ENCODE measurements at regions of chr14 and their contacts with region 1.

Region 1: DNA sequence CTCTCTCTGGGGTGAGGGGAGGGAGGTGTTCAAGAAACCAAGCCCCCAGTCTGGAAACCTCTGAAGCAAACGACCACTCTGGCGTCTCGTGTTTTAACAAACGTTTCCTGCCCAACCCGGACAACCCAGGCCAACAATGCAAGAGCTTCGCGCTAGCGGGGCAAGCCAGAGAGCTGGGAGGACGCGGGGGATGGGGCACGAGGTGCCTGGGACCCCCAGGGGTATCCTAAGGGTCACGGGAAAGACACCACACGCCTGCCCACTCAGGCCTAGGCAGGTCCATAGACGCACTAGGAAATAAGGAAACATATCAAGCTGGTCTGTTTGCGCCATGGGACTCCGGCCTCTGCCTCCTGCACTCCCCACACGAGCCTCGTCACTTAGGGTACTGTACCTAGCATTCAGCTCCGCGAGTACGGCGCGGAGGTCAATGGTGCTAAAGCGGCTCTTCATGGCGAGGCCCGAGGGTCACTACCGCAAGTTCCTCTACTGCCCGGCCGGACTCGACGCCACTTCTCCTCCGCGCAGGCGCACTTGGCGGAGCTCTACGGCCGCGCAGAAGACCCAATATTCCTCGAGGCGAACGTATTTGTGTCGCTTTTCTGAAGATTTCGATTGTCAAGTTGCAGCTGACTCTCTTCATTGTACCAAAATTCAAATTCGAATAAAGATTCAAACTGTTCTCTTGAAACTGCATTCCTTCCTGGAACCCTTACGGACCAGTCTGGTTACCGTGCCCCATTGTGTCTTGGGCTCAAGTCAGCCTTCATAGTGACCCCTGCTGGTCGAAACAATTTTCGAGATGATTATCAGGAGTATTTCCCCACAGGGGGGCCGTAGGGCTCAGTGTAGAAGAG is at the start of gene NEMF:
- DNase-seq: peak; percentile 86
- ATAC-seq: peak; percentile 87
- H3K4me3 ChIP-seq: peak within 1 kb of the TSS; percentile 80 to 97
- H3K27ac ChIP-seq: peak within 1 kb of the TSS; percentile 92
- H3K4me1 ChIP-seq: peaks cover 7% of the 10 kb centered on the region; the same call in 1 of the 2 replicates
- H3K27me3 ChIP-seq: no peaks in the 10 kb centered on the region
- CTCF ChIP-seq: peak; percentile 83
- total RNA-seq, gene NEMF: 38.3 TPM

Region 2: GRCh38 chr14:50156111-50156510 is 303.6 kb after region 1 on chr14:
- CTCF ChIA-PET with region 1: no interaction called
- POLR2A ChIA-PET with region 1: interaction called, 14 read pairs
- in situ Hi-C with region 1: no loop called
- intact Hi-C with region 1: no loop called
- DNase-seq: no peak
- ATAC-seq: no peak
- H3K4me3 ChIP-seq: no peak overlapping the region
- H3K27ac ChIP-seq: no peak overlapping the region
- H3K4me1 ChIP-seq: no peaks in the 10 kb centered on the region
- H3K27me3 ChIP-seq: no peaks in the 10 kb centered on the region
- CTCF ChIP-seq: no peak

Region 3: GRCh38 chr14:50198499-50198898 is 346.0 kb after region 1 on chr14:
- CTCF ChIA-PET with region 1: interaction called, 15 read pairs
- POLR2A ChIA-PET with region 1: no interaction called
- in situ Hi-C with region 1: no loop called
- intact Hi-C with region 1: no loop called
- DNase-seq: no peak
- ATAC-seq: no peak
- H3K4me3 ChIP-seq: no peak overlapping the region
- H3K27ac ChIP-seq: no peak overlapping the region
- H3K4me1 ChIP-seq: no peaks in the 10 kb centered on the region
- H3K27me3 ChIP-seq: no peaks in the 10 kb centered on the region
- CTCF ChIP-seq: no peak